ENCODE measurements at regions of chr5 and their contacts with region 1.

Region 1: DNA sequence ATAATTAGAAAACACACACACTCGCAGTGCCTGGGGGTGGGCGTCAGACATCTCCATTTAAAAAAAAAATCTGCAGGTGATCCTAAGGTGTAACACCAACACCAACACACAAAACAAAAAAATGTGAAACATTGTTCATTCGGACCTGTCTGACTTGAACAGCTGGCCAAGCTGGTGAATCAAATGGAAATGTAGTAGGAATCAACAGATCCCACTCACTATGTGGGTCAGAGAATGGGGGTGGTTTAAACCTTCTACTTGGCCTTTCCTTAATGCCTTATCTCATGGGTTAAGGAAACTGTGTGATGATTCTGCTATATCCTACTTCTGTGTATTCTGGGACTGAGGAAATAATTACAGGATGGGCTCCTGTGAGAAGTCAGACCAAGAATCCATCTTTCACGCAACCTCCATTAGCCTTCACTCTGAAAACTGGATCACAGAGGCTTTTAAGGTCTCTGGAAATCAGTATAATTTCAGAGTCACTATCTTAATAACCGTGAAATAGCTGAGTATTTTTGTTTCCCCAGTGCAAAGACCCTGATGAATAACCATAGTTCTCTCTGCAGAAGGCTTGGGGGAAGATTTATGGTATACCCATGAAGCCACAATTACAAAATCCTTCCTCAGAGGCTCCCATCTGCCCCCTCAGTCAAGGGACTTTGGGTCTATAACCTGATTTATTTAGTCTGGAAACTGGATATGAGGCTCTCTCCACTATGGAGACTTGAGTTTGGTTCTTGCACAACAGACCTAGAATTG is 17.2 kb upstream of the MCCC2 start:
- DNase-seq: no peak
- ATAC-seq: no peak
- H3K4me3 Mint-ChIP-seq: no peak overlapping the region
- H3K27ac Mint-ChIP-seq: no peak overlapping the region
- H3K4me1 Mint-ChIP-seq: no peaks in the 10 kb centered on the region
- H3K27me3 Mint-ChIP-seq: no peaks in the 10 kb centered on the region

Region 2: DNA sequence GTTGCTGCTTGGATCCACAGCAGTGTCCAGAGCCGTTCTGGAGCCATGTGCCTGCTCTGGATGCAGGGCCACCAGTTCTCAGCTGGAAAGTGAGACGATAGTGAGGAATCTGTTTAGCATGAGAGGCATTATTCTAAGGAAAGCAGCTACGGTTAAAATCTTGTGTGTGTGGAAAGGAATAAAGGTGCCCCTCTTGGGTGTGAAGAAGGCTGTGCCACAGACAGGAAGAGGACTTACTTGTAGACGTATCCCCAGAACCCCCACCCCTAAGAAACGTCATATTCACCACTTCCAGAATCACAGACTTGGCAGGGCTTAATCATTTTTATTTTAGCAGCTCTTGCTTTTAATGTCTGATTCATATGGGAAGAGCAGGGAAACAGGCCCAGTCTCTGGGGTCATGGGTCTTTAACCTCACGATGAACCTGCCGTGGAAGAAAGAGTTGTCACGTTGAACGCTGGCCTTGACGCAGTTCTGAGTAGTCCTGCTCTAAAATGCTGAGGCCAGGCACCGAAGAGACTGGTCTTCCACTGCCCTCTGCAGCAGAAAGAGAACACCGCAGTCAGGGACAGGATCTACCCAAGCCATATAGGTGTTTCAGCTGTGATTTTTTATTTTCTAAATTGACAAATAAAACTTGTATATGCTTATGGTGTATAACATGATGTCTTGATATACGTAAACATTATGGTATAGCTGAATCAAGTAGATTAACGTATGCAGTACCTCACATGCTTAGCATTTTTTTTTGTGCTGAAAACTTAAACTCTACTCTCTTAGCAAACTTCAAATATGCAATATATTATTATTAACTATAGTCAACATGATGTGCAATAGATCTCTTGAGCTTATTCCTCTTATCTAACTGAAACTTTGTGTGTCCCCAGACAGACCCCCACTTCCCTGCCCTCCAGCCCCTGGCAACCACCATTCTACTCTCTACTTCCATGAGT is 187.9 kb after region 1 on chr5:
- CTCF ChIA-PET with region 1: no interaction called
- POLR2A ChIA-PET with region 1: no interaction called
- intact Hi-C with region 1: loop called in 1 of 2 experiments (anchors 10 kb)
- DNase-seq: peak; percentile 67
- ATAC-seq: peak; percentile 90
- H3K4me3 Mint-ChIP-seq: no peak overlapping the region
- H3K27ac Mint-ChIP-seq: no peak overlapping the region
- H3K4me1 Mint-ChIP-seq: peaks cover 5% of the 10 kb centered on the region
- H3K27me3 Mint-ChIP-seq: peaks cover 4% of the 10 kb centered on the region

Region 3: GRCh38 chr5:71887680-71888079 is 317.8 kb after region 1 on chr5:
- CTCF ChIA-PET with region 1: no interaction called
- POLR2A ChIA-PET with region 1: no interaction called
- intact Hi-C with region 1: no loop called
- DNase-seq: peak; percentile 8
- ATAC-seq: peak; percentile 100
- H3K4me3 Mint-ChIP-seq: peak overlapping the region; percentile 20
- H3K27ac Mint-ChIP-seq: no peak overlapping the region
- H3K4me1 Mint-ChIP-seq: peaks cover 2% of the 10 kb centered on the region
- H3K27me3 Mint-ChIP-seq: peaks cover 13% of the 10 kb centered on the region